ENCODE measurements at regions of chr1 and their contacts with region 1.

Region 1: GRCh38 chr1:91885716-91886506 is at the start of gene TGFBR3:
- DNase-seq: peak; percentile 90
- ATAC-seq: peak; percentile 93
- H3K4me3 ChIP-seq: peak within 1 kb of the TSS; percentile 90
- H3K27ac ChIP-seq: peak within 1 kb of the TSS; percentile 78
- H3K4me1 ChIP-seq: peaks cover 7% of the 10 kb centered on the region
- H3K27me3 ChIP-seq: no peaks in the 10 kb centered on the region
- CTCF ChIP-seq: peak; percentile 59
- POLR2A ChIP-seq: peak; percentile 73
- RAD21 ChIP-seq: peak; percentile 62
- total RNA-seq, gene TGFBR3: 8.3 and 11.3 TPM in 2 replicates

Region 2: DNA sequence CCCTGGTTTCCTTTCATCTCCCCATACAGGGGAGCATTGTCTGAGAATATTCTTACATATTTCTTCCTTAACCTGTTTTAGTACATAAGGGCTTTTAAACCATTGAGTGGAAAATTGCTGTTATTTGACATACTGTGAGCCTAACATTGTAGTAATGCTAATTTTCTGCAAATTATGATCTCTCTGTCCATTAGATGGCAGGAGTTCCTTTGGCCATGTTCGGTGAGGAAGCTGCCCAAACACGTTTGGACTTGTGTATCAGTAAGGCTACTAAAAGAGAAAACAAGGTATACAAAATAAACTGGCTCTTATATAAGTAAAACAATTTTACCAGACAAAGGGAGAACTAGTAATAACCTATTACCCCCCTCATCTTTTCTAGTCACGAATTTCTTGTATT is 356.1 kb before region 1 on chr1:
- CTCF ChIA-PET with region 1: interaction called, 3 read pairs
- POLR2A ChIA-PET with region 1: no interaction called
- dilution Hi-C with region 1: no loop called
- in situ Hi-C with region 1: no loop called
- intact Hi-C with region 1: loop called (anchors 5 kb)
- DNase-seq: peak; percentile 73
- ATAC-seq: peak; percentile 61
- H3K4me3 ChIP-seq: no peak overlapping the region
- H3K27ac ChIP-seq: no peak overlapping the region
- H3K4me1 ChIP-seq: no peaks in the 10 kb centered on the region
- H3K27me3 ChIP-seq: peaks cover 11% of the 10 kb centered on the region
- CTCF ChIP-seq: peak; percentile 58
- POLR2A ChIP-seq: no peak
- RAD21 ChIP-seq: peak; percentile 76

Region 3: GRCh38 chr1:91732291-91733107 is 153.4 kb before region 1 on chr1:
- CTCF ChIA-PET with region 1: no interaction called
- POLR2A ChIA-PET with region 1: no interaction called
- dilution Hi-C with region 1: no loop called
- in situ Hi-C with region 1: loop called (anchors 10 kb)
- intact Hi-C with region 1: loop called (anchors 5 kb)
- DNase-seq: peak; percentile 91
- ATAC-seq: peak; percentile 76
- H3K4me3 ChIP-seq: no peak overlapping the region
- H3K27ac ChIP-seq: no peak overlapping the region
- H3K4me1 ChIP-seq: peaks cover 23% of the 10 kb centered on the region
- H3K27me3 ChIP-seq: no peaks in the 10 kb centered on the region
- CTCF ChIP-seq: no peak
- POLR2A ChIP-seq: no peak
- RAD21 ChIP-seq: no peak

Region 4: GRCh38 chr1:91781371-91781825 is 104.5 kb before region 1 on chr1:
- CTCF ChIA-PET with region 1: interaction called, 4 read pairs
- POLR2A ChIA-PET with region 1: no interaction called
- dilution Hi-C with region 1: no loop called
- in situ Hi-C with region 1: no loop called
- intact Hi-C with region 1: loop called (anchors 5 kb)
- DNase-seq: peak; percentile 93
- ATAC-seq: peak; percentile 91
- H3K4me3 ChIP-seq: no peak overlapping the region
- H3K27ac ChIP-seq: peak overlapping the region; percentile 87; the same call in 1 of the 2 replicates
- H3K4me1 ChIP-seq: peaks cover 20% of the 10 kb centered on the region
- H3K27me3 ChIP-seq: no peaks in the 10 kb centered on the region
- CTCF ChIP-seq: no peak
- POLR2A ChIP-seq: no peak
- RAD21 ChIP-seq: no peak

Region 5: DNA sequence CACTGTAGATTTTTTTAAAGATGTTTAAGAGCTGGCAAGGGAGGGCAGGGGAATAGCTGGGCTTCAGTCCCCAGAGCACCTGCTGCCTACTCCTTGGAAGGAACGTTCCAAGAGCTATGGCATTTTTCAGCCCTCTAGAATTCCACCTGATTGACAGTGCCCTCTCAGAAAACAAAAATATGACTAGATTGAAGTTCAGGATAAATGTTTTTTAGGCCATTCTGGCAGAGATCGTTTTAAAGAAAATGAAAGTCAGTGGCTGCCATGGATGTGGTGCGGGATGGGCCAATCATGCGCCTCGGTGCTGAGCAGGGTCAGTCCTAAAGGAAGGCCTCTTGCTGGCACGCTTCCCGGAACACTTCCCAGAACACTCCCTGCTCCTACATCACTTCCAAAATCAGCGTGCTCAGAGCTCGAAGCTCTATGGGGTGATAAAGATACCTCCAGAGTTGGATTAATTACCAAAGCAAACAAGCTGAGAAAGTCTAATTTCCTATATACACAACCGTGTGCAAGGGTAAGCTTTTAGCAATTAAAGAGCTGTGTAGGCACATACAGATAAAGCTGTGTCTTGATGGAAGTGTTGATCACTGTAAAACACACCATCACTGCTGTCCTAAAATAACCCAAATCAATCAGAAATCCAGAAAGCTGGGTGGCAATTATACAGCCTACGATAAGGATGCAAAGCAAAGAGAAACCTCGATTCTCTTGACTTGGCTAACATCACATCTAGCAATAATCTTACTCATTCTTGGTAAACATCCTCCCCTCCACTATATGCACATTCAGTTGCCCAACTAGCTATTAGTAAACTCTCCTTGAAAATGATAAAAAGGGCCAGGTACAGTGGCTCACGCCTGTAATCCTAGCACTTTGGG is 34.5 kb before region 1 on chr1:
- CTCF ChIA-PET with region 1: interaction called, 3 read pairs
- POLR2A ChIA-PET with region 1: no interaction called
- dilution Hi-C with region 1: no loop called
- in situ Hi-C with region 1: no loop called
- intact Hi-C with region 1: loop called (anchors 2 kb)
- DNase-seq: peak; percentile 89
- ATAC-seq: peak; percentile 99
- H3K4me3 ChIP-seq: peak overlapping the region; percentile 24; the same call in 1 of the 2 replicates
- H3K27ac ChIP-seq: peak overlapping the region; percentile 71; the same call in 1 of the 2 replicates
- H3K4me1 ChIP-seq: peaks cover 10% of the 10 kb centered on the region
- H3K27me3 ChIP-seq: no peaks in the 10 kb centered on the region
- CTCF ChIP-seq: no peak
- POLR2A ChIP-seq: no peak
- RAD21 ChIP-seq: no peak

Region 6: DNA sequence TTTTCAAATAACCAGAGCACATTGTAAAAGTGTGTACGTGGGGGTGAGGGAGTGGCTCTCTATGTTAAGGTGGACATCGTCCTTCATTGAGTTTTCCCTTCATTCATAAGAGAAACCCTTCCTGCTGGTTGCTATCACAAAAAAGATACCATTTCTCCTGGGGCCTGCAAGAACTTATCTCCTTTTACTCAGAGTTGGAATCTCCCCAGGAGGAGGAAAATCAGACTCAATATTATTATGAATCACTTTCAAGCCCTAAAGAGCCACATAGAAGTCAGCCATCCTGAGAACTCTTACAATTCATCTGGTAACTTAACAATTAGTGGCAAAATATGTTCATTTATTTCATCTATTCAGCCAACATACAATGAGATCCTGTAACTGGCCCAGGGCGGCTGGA is 27.1 kb after region 1 on chr1:
- CTCF ChIA-PET with region 1: no interaction called
- POLR2A ChIA-PET with region 1: no interaction called
- dilution Hi-C with region 1: no loop called
- in situ Hi-C with region 1: no loop called
- intact Hi-C with region 1: no loop called
- DNase-seq: peak; percentile 55
- ATAC-seq: no peak
- H3K4me3 ChIP-seq: no peak overlapping the region
- H3K27ac ChIP-seq: no peak overlapping the region
- H3K4me1 ChIP-seq: no peaks in the 10 kb centered on the region
- H3K27me3 ChIP-seq: no peaks in the 10 kb centered on the region
- CTCF ChIP-seq: no peak
- POLR2A ChIP-seq: no peak
- RAD21 ChIP-seq: no peak

Region 7: GRCh38 chr1:91940496-91940895 is 54.6 kb after region 1 on chr1:
- CTCF ChIA-PET with region 1: no interaction called
- POLR2A ChIA-PET with region 1: no interaction called
- dilution Hi-C with region 1: no loop called
- in situ Hi-C with region 1: no loop called
- intact Hi-C with region 1: no loop called
- DNase-seq: no peak
- ATAC-seq: no peak
- H3K4me3 ChIP-seq: no peak overlapping the region
- H3K27ac ChIP-seq: no peak overlapping the region
- H3K4me1 ChIP-seq: no peaks in the 10 kb centered on the region
- H3K27me3 ChIP-seq: no peaks in the 10 kb centered on the region
- CTCF ChIP-seq: no peak
- POLR2A ChIP-seq: no peak
- RAD21 ChIP-seq: no peak